Astrocyte of the cerebellum (primary cell): ENCODE measurements at regions of chr7 and their contacts with region 1.

Region 1: DNA sequence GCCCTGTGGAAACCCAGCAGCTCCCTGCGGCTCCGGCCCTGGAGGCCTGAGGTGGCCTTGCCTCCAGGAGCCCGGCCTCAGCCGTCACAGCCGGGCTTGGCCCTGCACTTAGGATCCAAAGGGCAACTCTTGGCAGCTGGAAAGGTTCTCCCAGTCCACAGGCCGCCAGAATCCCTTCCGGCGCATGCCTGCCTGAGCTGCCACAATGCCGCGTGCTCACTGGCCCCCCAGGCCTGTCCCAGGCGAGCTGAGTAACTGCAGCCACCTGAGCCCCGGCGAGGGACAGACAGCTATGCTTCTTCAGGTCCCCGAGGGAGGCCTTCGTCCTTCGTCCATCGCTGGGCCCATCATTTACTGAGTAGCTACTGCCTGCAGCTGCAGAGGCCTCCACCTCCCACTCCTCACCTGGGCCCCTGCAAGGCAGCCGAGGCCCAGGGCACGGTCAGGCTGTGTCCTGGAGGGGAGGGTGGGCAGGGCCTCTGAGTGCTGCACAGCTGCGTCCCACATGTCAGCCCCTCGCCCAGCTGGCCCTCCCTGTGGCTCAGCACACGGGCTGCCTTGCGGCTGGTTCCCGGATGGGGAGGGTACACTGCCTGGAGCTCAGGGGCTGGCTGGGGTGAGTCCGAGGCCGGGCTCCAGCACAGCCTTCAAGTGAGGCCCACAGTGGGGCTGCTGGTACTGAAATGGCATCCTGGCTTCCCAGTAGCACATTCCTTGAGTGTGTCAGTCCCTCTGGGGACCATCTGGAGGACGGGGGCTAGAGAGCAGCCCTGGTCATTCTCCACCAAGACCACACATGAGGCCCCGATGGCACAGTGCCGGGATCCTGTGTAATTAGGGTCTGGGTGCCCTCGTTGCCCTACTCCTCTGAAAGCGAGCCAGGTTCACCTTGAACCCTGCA is 172.5 kb downstream of the ELFN1 start:
- DNase-seq: no peak
- H3K4me3 ChIP-seq: no peak overlapping the region
- CTCF ChIP-seq: no peak

Region 2: DNA sequence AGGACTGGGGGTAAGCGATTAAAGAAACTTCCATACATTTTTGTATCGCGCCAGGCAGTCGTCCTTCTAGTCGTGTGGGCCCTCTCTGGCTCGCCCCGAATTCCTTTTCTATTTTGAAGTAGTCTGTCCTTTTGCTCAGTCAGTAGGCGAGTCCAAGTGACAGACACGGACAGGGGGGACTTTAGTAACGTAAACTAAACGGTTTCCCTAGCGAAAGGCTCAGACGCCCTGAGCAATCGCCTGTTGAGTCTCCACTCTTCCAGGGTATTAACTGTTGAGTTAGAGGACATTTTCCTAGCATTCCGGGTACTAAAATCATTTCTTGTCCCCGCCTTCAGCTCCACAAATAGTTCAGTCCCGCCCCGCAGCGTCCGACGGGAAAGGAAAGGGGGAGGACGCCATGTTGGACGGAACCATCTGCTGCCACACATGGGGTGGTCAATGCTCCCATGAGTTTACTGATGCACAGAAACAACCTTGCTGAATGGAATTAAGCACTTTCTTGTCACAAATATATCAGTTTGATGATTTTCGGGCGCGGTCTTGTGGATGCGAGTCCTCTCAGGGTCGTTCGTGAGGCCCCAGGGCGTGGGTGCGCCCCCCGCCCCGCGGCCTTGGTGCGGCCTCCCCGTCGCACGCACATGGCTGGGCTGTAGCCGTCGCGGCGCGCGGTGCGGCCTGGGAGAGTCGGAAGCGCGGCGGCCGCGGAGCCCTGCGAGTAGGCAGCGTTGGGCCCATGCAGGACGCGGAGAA is 511.8 kb after region 1 on chr7 and contains the start of gene EIF3B:
- in situ Hi-C with region 1: loop called (anchors 25 kb)
- DNase-seq: peak; percentile 89
- H3K4me3 ChIP-seq: peak within 1 kb of the TSS; percentile 97
- CTCF ChIP-seq: no peak